Heart right ventricle (tissue), 16 donors: ENCODE measurements at regions of chr18 and their contacts with region 1.

Region 1: GRCh38 chr18:55522011-55522410 is 66.0 kb downstream of the TCF4 start:
- DNase-seq: no peak
- ATAC-seq: peak in 2 of 8 donors; percentile 16 to 33
- H3K4me3 ChIP-seq: no peak overlapping the region
- H3K27ac ChIP-seq: peak overlapping the region in 1 of 10 donors; percentile 35
- H3K4me1 ChIP-seq: peaks cover 0 to 54% (median 5%) of the 10 kb centered on the region in 9 donors
- H3K27me3 ChIP-seq: no peaks in the 10 kb centered on the region
- CTCF ChIP-seq: peak in 7 of 9 donors; percentile 19 to 38 (median 29)

Region 2: GRCh38 chr18:55110436-55110835 is 411.6 kb before region 1 on chr18:
- intact Hi-C with region 1: loop called in 1 of 10 experiments (anchors 10 kb)
- DNase-seq: peak; percentile 13 to 58
- ATAC-seq: peak; percentile 86 to 95 (median 93)
- H3K4me3 ChIP-seq: no peak overlapping the region
- H3K27ac ChIP-seq: peak overlapping the region; percentile 32 to 83 (median 71)
- H3K4me1 ChIP-seq: peaks cover 0 to 41% (median 11%) of the 10 kb centered on the region in 9 donors
- H3K27me3 ChIP-seq: no peaks in the 10 kb centered on the region
- CTCF ChIP-seq: no peak

Region 3: GRCh38 chr18:55243857-55244256 is 278.2 kb before region 1 on chr18:
- intact Hi-C with region 1: loop called in 2 of 10 experiments (anchors 10 kb)
- DNase-seq: peak in 1 of 2 donors; percentile 89
- ATAC-seq: peak; percentile 75 to 91 (median 84)
- H3K4me3 ChIP-seq: peak overlapping the region in 1 of 10 donors; percentile 9
- H3K27ac ChIP-seq: peak overlapping the region; percentile 55 to 89 (median 76)
- H3K4me1 ChIP-seq: peaks cover 21 to 100% (median 80%) of the 10 kb centered on the region in 9 donors
- H3K27me3 ChIP-seq: no peaks in the 10 kb centered on the region
- CTCF ChIP-seq: no peak

Region 4: GRCh38 chr18:55559739-55560138 is 37.7 kb after region 1 on chr18:
- intact Hi-C with region 1: loop called in 1 of 10 experiments (anchors 5 kb)
- DNase-seq: peak; percentile 25 to 71
- ATAC-seq: peak in 5 of 8 donors; percentile 42 to 86 (median 71)
- H3K4me3 ChIP-seq: no peak overlapping the region
- H3K27ac ChIP-seq: peak overlapping the region in 2 of 10 donors; percentile 13 to 14
- H3K4me1 ChIP-seq: peaks cover 0 to 32% (median 4%) of the 10 kb centered on the region in 9 donors
- H3K27me3 ChIP-seq: no peaks in the 10 kb centered on the region
- CTCF ChIP-seq: no peak

Region 5: GRCh38 chr18:55878224-55878623 is 356.2 kb after region 1 on chr18:
- intact Hi-C with region 1: no loop called
- DNase-seq: no peak
- ATAC-seq: peak in 1 of 8 donors; percentile 60
- H3K4me3 ChIP-seq: no peak overlapping the region
- H3K27ac ChIP-seq: peak overlapping the region in 2 of 10 donors; percentile 25 to 31
- H3K4me1 ChIP-seq: peaks cover 0 to 25% (median 11%) of the 10 kb centered on the region in 9 donors
- H3K27me3 ChIP-seq: no peaks in the 10 kb centered on the region
- CTCF ChIP-seq: no peak